ENCODE measurements at regions of chr19 and their contacts with region 1.

Region 1: DNA sequence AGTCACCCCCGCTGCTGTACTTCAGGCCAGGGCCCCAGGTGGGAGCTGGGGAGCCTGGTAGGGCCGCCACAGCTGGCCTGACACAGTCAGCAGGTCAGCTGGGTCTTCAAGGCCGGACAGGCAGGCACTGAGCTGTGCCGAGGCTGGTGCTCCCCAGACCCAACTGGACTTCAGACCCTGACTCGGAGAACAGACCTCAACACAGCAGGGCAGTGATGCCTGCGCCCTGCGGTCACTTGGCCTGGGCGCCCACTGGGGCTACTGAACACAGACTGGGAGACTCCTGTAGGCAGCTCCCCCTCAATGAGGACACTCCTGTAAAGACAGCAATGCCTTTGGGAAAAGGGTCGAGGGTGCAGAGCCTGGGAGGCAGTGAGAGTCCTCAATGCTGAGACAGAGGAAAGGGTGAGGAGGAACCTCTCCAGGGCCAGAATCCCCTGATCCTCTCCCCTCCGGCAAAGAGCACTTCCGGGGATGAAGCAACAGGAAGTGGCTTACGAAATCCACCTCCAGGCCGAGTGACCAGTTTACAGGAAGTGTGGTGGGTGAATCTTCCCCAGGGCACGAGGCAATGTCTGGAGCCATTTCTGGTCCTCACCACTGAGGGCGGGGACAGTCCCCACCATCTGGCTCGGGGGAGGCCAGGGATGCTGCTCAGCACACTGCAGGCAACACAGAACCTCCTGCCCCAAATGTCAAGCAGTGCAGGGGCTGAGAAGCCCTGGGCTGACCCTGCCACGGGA is 40.8 kb upstream of the ISYNA1 start:
- DNase-seq: peak; percentile 46
- H3K4me3 ChIP-seq: peak overlapping the region in 1 of 4 donors; percentile 22
- H3K27ac ChIP-seq: peak overlapping the region; percentile 72 to 94 (median 74)
- H3K4me1 ChIP-seq: peaks cover 35 to 87% (median 65%) of the 10 kb centered on the region in 3 donors
- H3K27me3 ChIP-seq: no peaks in the 10 kb centered on the region
- CTCF ChIP-seq: no peak
- POLR2A ChIP-seq: no peak

Region 2: GRCh38 chr19:18571564-18572300 is 93.0 kb after region 1 on chr19 and contains the start of gene UBA52:
- intact Hi-C with region 1: loop called (anchors 10 kb)
- DNase-seq: peak; percentile 86
- H3K4me3 ChIP-seq: peak within 1 kb of the TSS; percentile 78 to 95 (median 86)
- H3K27ac ChIP-seq: peak within 1 kb of the TSS; percentile 92 to 97 (median 96)
- H3K4me1 ChIP-seq: peaks cover 12 to 30% (median 21%) of the 10 kb centered on the region in 3 donors
- H3K27me3 ChIP-seq: no peaks in the 10 kb centered on the region
- CTCF ChIP-seq: peak in 2 of 6 experiments; percentile 4 to 24
- POLR2A ChIP-seq: peak in 3 of 4 donors; percentile 83 to 91 (median 90)
- total RNA-seq, gene UBA52: 445 to 799 (median 753) TPM

Region 3: GRCh38 chr19:18629166-18630088 is 150.7 kb after region 1 on chr19:
- intact Hi-C with region 1: no loop called
- DNase-seq: no peak
- H3K4me3 ChIP-seq: no peak overlapping the region
- H3K27ac ChIP-seq: peak overlapping the region; percentile 48 to 79 (median 60)
- H3K4me1 ChIP-seq: peaks cover 0 to 6% (median 4%) of the 10 kb centered on the region in 3 donors
- H3K27me3 ChIP-seq: peaks cover 0 to 4% (median 0%) of the 10 kb centered on the region in 4 donors
- CTCF ChIP-seq: no peak
- POLR2A ChIP-seq: no peak